HepG2 (cell line): ENCODE measurements at regions of chr10 and their contacts with region 1.

Region 1: GRCh38 chr10:115118346-115118745 is 25.2 kb downstream of the ATRNL1 start:
- DNase-seq: no peak
- ATAC-seq: no peak
- H3K4me3 ChIP-seq: no peak overlapping the region
- H3K27ac ChIP-seq: no peak overlapping the region
- H3K4me1 ChIP-seq: no peaks in the 10 kb centered on the region
- H3K27me3 ChIP-seq: no peaks in the 10 kb centered on the region
- CTCF ChIP-seq: no peak
- EP300 ChIP-seq: no peak
- POLR2A ChIP-seq: no peak
- RAD21 ChIP-seq: no peak

Region 2: GRCh38 chr10:113454341-113455061 is 1663.8 kb before region 1 on chr10:
- CTCF ChIA-PET with region 1: no interaction called
- POLR2A ChIA-PET with region 1: no interaction called
- in situ Hi-C with region 1: no loop called
- intact Hi-C with region 1: loop called (anchors 5 kb)
- DNase-seq: peak; percentile 5
- ATAC-seq: peak; percentile 80
- H3K4me3 ChIP-seq: no peak overlapping the region
- H3K27ac ChIP-seq: no peak overlapping the region
- H3K4me1 ChIP-seq: peaks cover 6% of the 10 kb centered on the region
- H3K27me3 ChIP-seq: peaks cover 0 to 7% of the 10 kb centered on the region in 2 experiments; a peak in 1 of 5 replicates
- CTCF ChIP-seq: peak; percentile 74
- EP300 ChIP-seq: no peak
- POLR2A ChIP-seq: no peak
- RAD21 ChIP-seq: 0 out of 2 replicates have a peak, but pooled peaks have one; percentile 16

Region 3: DNA sequence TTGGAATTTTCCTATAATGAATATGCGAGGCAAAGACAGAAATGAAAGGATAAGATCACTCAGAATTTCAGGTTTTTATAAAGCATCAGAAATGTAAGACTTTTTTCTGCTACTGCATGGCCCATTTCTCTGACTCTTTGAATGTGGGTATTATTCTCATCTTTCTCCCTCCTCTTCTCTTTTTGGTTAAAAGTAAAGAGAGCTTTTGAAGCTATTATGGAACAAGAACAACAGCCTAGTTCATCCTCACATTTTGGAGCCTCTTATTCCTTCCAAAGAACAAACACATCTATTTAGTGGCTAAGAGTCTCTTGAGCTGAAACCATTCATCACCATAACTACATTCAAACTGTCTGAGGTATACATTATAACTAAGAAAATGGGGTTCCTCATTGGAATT is 44.5 kb before region 1 on chr10:
- CTCF ChIA-PET with region 1: no interaction called
- POLR2A ChIA-PET with region 1: no interaction called
- in situ Hi-C with region 1: no loop called
- intact Hi-C with region 1: no loop called
- DNase-seq: no peak
- ATAC-seq: no peak
- H3K4me3 ChIP-seq: no peak overlapping the region
- H3K27ac ChIP-seq: no peak overlapping the region
- H3K4me1 ChIP-seq: no peaks in the 10 kb centered on the region
- H3K27me3 ChIP-seq: no peaks in the 10 kb centered on the region
- CTCF ChIP-seq: no peak
- EP300 ChIP-seq: no peak
- POLR2A ChIP-seq: no peak
- RAD21 ChIP-seq: no peak